Adrenal gland (tissue), 19 donors: ENCODE measurements at regions of chr2 and their contacts with region 1.

Region 1: DNA sequence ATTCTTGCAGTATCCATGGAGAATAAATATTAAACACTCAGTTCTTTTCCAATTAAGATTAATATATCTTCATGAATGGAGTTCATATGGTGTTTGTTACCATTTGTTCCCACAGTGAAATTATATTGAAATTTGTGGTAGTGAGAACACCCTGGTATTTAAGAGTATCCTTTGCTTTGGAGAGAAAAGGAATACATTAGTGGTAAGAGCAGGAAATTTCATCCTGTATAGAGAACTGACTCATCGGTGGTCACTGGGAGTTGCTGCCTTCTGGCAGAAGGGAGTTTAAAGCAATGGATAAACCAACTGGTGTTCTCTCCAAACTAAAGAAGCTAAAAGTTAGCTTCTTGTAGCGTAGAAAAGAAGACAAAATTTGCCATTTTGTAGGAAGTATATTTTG is 107.3 kb downstream of the MYO1B start:
- DNase-seq: no peak
- H3K4me3 ChIP-seq: no peak overlapping the region
- H3K27ac ChIP-seq: no peak overlapping the region
- H3K4me1 ChIP-seq: no peaks in the 10 kb centered on the region
- H3K27me3 ChIP-seq: no peaks in the 10 kb centered on the region
- CTCF ChIP-seq: no peak
- POLR2A ChIP-seq: no peak

Region 2: GRCh38 chr2:191231995-191232394 is 120.5 kb before region 1 on chr2:
- intact Hi-C with region 1: loop called in 1 of 2 experiments (anchors 10 kb)
- DNase-seq: no peak
- H3K4me3 ChIP-seq: no peak overlapping the region
- H3K27ac ChIP-seq: no peak overlapping the region
- H3K4me1 ChIP-seq: no peaks in the 10 kb centered on the region
- H3K27me3 ChIP-seq: no peaks in the 10 kb centered on the region
- CTCF ChIP-seq: peak in 5 of 6 experiments; percentile 12 to 39 (median 27)
- POLR2A ChIP-seq: no peak

Region 3: GRCh38 chr2:191539068-191539467 is 186.5 kb after region 1 on chr2:
- intact Hi-C with region 1: no loop called
- DNase-seq: peak in 2 of 7 donors; percentile 20 to 29
- H3K4me3 ChIP-seq: no peak overlapping the region
- H3K27ac ChIP-seq: no peak overlapping the region
- H3K4me1 ChIP-seq: no peaks in the 10 kb centered on the region
- H3K27me3 ChIP-seq: no peaks in the 10 kb centered on the region
- CTCF ChIP-seq: peak in 4 of 6 experiments; percentile 32 to 45 (median 38)
- POLR2A ChIP-seq: no peak

Region 4: DNA sequence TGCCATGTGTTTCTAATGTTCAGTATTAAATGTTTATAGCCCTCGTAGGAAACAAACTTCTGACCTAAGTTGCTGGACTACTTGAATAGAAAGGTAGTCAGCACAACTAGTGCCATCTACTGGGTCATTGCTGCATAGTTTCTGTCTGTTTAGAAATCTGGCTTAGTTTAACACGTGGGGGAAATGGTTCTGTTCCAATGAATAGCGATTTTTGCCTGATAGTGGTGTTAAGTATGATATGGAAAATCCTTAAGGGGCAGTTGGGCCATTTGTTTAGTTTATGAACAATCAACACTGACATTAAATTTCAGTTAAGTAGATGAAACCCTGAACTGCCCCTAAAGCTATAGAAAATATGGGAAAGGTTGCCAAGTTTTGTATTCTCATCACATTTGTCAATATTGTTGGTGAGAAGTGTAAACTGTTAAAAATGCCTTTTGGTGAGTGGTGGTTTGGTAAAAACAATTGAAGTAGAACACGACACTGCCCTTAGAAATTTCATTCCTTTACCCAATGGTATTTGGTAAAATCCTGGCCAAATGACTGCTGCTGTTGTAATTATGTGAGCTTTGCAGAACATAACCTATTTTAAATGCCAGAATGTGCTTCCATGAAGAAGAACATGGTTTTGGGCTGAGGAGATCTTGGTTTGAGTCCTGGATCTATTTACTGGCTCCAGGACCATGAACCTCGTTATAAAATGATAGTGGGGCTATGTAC is 338.6 kb after region 1 on chr2:
- intact Hi-C with region 1: no loop called
- DNase-seq: peak; percentile 25 to 76 (median 51)
- H3K4me3 ChIP-seq: no peak overlapping the region
- H3K27ac ChIP-seq: no peak overlapping the region
- H3K4me1 ChIP-seq: peaks cover 0 to 10% of the 10 kb centered on the region in 2 donors
- H3K27me3 ChIP-seq: no peaks in the 10 kb centered on the region
- CTCF ChIP-seq: peak; percentile 60 to 81 (median 76)
- POLR2A ChIP-seq: peak in 1 of 2 donors; percentile 9